Gastrocnemius medialis (tissue), 4 donors: ENCODE measurements at regions of chr2 and their contacts with region 1.

Region 1: GRCh38 chr2:158179660-158180059 is 78.0 kb downstream of the UPP2 start:
- DNase-seq: no peak
- ATAC-seq: no peak
- H3K4me3 ChIP-seq: no peak overlapping the region
- H3K27ac ChIP-seq: no peak overlapping the region
- H3K4me1 ChIP-seq: no peaks in the 10 kb centered on the region
- H3K27me3 ChIP-seq: no peaks in the 10 kb centered on the region
- CTCF ChIP-seq: no peak
- POLR2A ChIP-seq: no peak

Region 2: GRCh38 chr2:158144914-158145625 is 34.6 kb before region 1 on chr2:
- in situ Hi-C with region 1: no loop called
- intact Hi-C with region 1: no loop called
- DNase-seq: no peak
- ATAC-seq: no peak
- H3K4me3 ChIP-seq: no peak overlapping the region
- H3K27ac ChIP-seq: no peak overlapping the region
- H3K4me1 ChIP-seq: no peaks in the 10 kb centered on the region
- H3K27me3 ChIP-seq: no peaks in the 10 kb centered on the region
- CTCF ChIP-seq: no peak
- POLR2A ChIP-seq: no peak

Region 3: GRCh38 chr2:158745044-158745865 is 565.6 kb after region 1 on chr2:
- in situ Hi-C with region 1: loop called in 1 of 4 experiments (anchors 25 kb)
- intact Hi-C with region 1: no loop called
- DNase-seq: no peak
- ATAC-seq: peak in 1 of 2 donors; percentile 45
- H3K4me3 ChIP-seq: no peak overlapping the region
- H3K27ac ChIP-seq: no peak overlapping the region
- H3K4me1 ChIP-seq: peaks cover 2 to 11% of the 10 kb centered on the region in 2 donors
- H3K27me3 ChIP-seq: no peaks in the 10 kb centered on the region
- CTCF ChIP-seq: peak in 2 of 5 experiments; percentile 26 to 31
- POLR2A ChIP-seq: no peak